Activated B cell treated with CpG ODN at 0.5 μM for 24 hours (primary cell): ENCODE measurements at regions of chr20 and their contacts with region 1.

Region 1: DNA sequence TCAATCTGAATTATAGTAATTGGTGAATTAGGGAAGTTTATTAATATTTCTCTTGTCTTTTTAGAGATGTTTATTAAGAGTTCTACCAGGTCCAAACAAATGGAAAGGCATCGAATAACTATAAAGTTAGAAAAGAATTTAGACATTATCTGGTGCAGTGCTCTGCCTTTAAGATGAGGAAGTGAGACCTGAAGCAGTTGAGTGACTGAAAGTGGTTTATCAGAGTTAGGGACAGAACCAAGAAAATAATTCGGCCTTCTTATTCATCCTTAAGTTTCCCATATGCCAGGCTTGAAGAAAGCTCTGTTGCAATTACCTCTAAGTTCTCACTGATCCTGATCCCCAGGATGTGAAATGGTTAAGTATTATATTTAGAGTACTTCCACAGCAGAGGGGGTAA is 94.2 kb upstream of the FLRT3 start:
- DNase-seq: no peak
- ATAC-seq: no peak
- H3K4me3 Mint-ChIP-seq: no peak overlapping the region
- H3K27ac Mint-ChIP-seq: no peak overlapping the region
- H3K4me1 Mint-ChIP-seq: no peaks in the 10 kb centered on the region
- H3K27me3 Mint-ChIP-seq: no peaks in the 10 kb centered on the region
- CTCF ChIP-seq: no peak

Region 2: GRCh38 chr20:14415492-14415891 is 16.1 kb before region 1 on chr20:
- CTCF ChIA-PET with region 1: no interaction called
- POLR2A ChIA-PET with region 1: no interaction called
- intact Hi-C with region 1: loop called (anchors 2 kb)
- DNase-seq: no peak
- ATAC-seq: no peak
- H3K4me3 Mint-ChIP-seq: no peak overlapping the region
- H3K27ac Mint-ChIP-seq: no peak overlapping the region
- H3K4me1 Mint-ChIP-seq: no peaks in the 10 kb centered on the region
- H3K27me3 Mint-ChIP-seq: no peaks in the 10 kb centered on the region
- CTCF ChIP-seq: no peak

Region 3: GRCh38 chr20:14666696-14667625 is 235.4 kb after region 1 on chr20:
- CTCF ChIA-PET with region 1: no interaction called
- POLR2A ChIA-PET with region 1: no interaction called
- intact Hi-C with region 1: no loop called
- DNase-seq: no peak
- ATAC-seq: no peak
- H3K4me3 Mint-ChIP-seq: no peak overlapping the region
- H3K27ac Mint-ChIP-seq: no peak overlapping the region
- H3K4me1 Mint-ChIP-seq: no peaks in the 10 kb centered on the region
- H3K27me3 Mint-ChIP-seq: no peaks in the 10 kb centered on the region
- CTCF ChIP-seq: no peak